Activated CD4-positive, alpha-beta memory T cell treated with anti-CD3 and anti-CD28 coated beads for 36 hours (primary cell): ENCODE measurements at regions of chr6 and their contacts with region 1.

Region 1: DNA sequence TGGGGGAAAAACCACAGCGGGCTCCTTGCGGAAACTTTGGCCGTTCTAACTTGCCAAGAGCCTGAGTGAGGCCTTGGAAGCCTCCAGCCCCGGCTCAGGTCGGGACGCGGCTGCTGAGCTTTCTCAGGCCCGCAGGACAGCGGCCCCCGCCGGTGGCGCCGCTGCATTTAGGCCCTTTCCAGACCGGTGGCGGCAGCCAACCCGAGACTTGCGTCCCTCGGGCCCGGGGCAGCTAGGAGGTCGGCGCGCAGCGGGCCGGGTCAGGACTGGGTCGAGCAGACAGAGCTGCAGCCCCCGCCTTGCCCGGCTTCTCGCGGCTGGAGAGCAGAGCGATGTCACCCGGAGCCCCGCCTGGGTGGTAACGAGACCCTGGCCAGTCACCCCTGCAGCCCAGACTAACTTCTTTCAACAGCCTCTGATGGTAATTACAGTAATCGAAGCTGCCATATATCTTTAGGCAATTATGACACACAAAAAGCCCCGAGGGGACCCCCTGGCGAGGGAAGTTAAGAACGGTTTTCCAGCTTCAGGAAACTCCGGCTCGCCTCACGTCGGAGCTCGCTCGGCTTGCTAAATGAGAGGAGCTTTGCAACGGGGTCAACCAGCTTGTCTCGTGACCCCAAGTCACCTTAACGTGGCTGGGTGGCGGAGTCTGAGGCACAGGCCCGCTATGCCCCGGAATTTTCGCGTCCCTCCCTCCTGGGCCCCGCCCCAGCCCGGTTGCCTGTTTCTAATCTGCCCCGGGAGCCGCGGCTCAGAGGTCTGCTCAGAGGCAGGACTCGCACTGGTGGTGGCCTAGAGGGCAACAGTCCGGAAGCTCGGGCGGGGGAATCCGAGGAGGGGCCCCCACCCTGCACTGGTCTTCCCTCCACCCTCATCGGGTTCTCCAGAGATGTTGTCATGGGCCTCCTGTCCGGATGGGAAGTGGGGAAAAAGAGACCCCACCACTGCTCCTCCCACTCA is 3.0 kb downstream of the NR2E1 start:
- DNase-seq: peak; percentile 37
- H3K4me3 Mint-ChIP-seq: peak overlapping the region; percentile 48
- H3K27ac Mint-ChIP-seq: no peak overlapping the region
- H3K4me1 Mint-ChIP-seq: peaks cover 40% of the 10 kb centered on the region
- H3K27me3 Mint-ChIP-seq: peaks cover 84% of the 10 kb centered on the region

Region 2: DNA sequence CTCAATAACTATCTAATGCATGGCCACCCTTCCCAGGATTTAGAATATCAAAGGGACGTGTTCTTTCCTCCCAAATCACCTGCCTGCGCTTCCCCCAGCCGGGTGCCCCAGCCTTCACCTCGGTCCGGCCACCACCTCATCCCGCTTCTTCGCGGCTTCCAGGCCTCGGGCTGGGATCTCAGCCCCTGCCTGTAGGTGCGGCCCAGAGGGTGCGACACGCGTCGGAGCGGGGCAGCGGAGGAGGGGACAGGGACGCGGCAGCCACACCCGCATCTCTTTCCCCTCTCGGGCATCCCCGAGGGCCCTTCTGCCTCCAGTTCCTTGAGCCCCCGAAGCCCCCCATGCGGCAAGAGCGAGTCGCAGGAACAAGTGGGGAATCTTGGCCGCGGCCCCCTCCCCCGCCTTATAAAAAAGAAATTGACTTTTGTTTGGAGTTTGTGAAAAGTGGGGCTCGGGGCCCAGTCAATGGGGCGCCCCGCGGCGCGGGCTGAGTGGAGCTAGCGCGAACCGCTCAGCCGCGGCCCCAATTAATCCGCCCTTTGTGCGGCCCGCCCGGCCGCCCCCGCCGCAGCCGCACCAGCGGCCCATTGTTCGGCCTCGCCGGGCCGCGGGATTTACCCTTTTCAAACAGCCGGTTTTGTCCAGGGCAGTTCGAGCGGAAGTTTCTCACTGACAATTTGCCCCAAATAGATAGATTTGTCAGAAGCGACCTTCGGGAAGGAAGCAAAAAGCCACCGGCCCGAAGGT is 11.4 kb before region 1 on chr6:
- CTCF ChIA-PET with region 1: interaction called, 5 read pairs
- POLR2A ChIA-PET with region 1: no interaction called
- intact Hi-C with region 1: loop called (anchors 1 kb)
- DNase-seq: no peak
- H3K4me3 Mint-ChIP-seq: peak overlapping the region; percentile 3
- H3K27ac Mint-ChIP-seq: no peak overlapping the region
- H3K4me1 Mint-ChIP-seq: peaks cover 11% of the 10 kb centered on the region
- H3K27me3 Mint-ChIP-seq: peaks cover 77% of the 10 kb centered on the region

Region 3: GRCh38 chr6:108186226-108186625 is 17.4 kb after region 1 on chr6:
- CTCF ChIA-PET with region 1: no interaction called
- POLR2A ChIA-PET with region 1: no interaction called
- intact Hi-C with region 1: no loop called
- DNase-seq: no peak
- H3K4me3 Mint-ChIP-seq: no peak overlapping the region
- H3K27ac Mint-ChIP-seq: no peak overlapping the region
- H3K4me1 Mint-ChIP-seq: no peaks in the 10 kb centered on the region
- H3K27me3 Mint-ChIP-seq: peaks cover 17% of the 10 kb centered on the region